Endothelial cell of umbilical vein (primary cell): ENCODE measurements at regions of chr15 and their contacts with region 1.

Region 1: GRCh38 chr15:93087825-93088199 is 1.2 kb downstream of the RGMA start:
- DNase-seq: peak; percentile 47
- H3K4me3 ChIP-seq: no peak overlapping the region
- H3K27ac ChIP-seq: no peak overlapping the region
- H3K4me1 ChIP-seq: peaks cover 3% of the 10 kb centered on the region
- H3K27me3 ChIP-seq: peaks cover 40 to 53% of the 10 kb centered on the region in 2 experiments
- CTCF ChIP-seq: peak; percentile 78 to 82
- POLR2A ChIP-seq: no peak

Region 2: DNA sequence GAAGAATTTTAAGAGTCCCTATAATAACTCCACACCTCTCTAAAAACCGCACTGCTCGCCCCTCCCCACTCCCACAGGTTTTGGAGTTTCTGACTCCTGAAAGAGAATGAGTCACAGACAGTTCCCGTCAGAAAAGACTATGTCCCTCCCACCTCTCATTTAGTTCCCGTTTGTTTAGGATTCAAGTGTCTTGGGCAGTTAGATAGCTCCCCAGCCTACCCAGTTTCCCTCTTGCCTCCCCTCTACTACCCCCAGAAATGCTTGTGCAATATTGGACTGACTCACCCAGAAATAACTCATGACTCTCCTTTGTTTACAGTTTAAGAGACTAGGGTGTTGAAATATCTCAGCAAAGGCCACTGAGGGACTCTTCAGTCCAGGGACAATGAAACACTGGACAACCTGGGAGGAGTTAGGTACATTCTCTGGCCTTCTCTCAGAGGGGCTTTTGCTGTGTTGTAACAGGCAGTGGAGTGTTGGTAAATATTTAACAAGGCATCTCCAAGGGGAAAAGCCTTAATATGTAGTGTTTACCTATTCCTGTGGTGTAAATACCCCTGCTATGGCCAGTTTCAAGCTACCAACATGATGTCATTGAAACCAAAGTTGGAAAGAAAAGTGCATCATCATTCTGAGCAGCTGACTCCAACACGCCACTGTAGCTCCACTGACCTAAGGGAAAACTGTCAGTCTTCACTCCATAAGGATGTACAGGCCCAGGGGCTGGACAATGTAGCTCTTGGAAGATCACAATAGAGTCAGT is 283.8 kb before region 1 on chr15:
- CTCF ChIA-PET with region 1: no interaction called
- POLR2A ChIA-PET with region 1: no interaction called
- dilution Hi-C with region 1: no loop called
- intact Hi-C with region 1: no loop called
- DNase-seq: peak; percentile 28
- H3K4me3 ChIP-seq: no peak overlapping the region
- H3K27ac ChIP-seq: peak overlapping the region; percentile 38
- H3K4me1 ChIP-seq: peaks cover 10% of the 10 kb centered on the region
- H3K27me3 ChIP-seq: no peaks in the 10 kb centered on the region
- CTCF ChIP-seq: no peak
- POLR2A ChIP-seq: no peak

Region 3: DNA sequence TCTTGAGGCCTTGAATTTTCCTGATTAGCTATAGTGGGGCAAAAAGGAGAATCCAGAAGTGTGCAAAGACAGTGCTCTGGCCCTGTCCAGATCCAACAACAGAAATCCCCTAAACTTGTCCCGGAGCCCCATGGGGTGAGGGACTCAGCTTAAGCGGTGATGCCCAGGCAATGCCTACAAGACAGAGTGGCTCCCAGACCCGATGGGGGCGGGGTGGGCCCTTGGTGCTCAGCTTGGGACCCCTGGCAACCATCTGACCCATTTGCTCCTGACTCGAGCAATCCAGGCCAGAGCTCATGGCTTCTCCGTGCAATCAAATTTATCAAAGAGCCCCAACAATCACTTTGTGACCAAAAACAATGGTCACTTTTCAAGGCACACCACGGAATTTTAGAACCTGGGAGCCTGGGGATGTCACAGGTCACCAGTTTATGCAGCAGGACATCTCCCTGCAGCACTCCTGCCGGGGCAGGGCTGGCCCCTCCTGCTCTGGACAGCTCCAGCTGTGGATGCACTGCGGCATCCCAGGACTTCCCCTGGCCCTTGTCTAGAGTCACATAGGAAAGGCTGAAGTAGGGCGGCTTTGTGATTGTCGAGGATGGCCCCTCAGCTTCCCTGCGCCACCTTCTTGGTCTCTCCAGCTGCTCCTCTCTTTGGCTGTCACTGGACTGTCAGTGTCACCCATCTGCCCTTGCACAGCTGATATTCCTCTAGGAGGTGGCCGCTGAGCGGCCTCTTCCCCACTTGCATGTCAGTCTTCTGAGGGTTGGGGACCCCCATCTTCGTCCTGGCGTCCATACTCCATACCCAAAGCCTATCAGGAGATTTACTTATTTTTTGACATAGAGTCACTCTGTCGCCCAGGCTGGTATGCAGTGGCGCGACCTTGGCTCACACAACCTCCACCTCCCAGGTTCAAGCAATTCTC is 27.2 kb before region 1 on chr15:
- CTCF ChIA-PET with region 1: interaction called, 18 read pairs
- POLR2A ChIA-PET with region 1: no interaction called
- dilution Hi-C with region 1: no loop called
- intact Hi-C with region 1: no loop called
- DNase-seq: no peak
- H3K4me3 ChIP-seq: no peak overlapping the region
- H3K27ac ChIP-seq: no peak overlapping the region
- H3K4me1 ChIP-seq: no peaks in the 10 kb centered on the region
- H3K27me3 ChIP-seq: no peaks in the 10 kb centered on the region
- CTCF ChIP-seq: no peak
- POLR2A ChIP-seq: no peak

Region 4: DNA sequence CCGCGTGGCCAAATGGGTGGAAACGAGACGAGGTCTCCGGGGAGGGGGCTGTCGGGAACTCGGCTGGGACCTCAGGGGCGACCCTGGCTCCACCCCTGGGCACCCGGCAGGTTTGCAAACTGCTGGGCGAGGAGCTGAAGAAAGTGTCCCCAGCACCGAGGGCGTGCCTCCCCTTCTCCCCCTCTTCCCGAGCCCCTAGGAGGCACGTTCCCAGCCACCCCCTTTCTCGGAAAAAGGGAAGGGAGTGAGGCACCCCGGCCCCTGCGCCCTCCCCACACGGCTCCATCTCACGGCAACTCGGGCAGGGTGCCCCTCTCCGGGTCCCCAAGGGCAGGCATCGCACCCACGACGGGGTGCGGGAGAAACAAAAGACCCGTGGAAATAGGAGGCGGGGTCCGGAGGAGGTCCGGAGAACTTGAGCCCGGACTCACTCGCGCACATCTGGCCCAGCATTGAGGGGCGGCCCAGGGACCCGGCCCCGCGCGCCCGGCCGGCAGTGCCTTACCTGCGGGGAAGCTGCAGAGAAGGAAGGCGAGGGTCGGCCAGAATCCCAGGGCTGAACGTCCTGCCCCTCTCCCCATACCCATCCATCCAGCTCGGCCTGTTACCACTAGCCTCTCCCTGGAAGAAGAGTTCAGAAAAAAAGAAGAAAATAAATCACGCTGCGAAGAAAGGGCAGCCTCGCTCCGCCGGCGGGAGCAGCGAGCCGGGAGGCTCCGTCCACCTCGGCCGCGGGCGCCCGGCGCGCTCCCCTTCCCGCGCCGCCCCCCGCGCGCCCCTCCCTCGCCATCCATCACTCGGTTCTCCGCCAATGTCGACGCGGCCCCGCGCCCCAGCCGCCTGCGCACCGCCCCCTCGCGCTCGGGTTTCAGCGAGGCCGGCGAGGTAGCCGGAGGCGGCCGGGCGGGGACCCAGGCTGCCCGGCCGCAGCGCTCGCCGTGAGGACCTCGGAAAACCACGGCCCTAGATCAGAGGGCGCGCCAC is 15.1 kb before region 1 on chr15:
- CTCF ChIA-PET with region 1: interaction called, 31 read pairs
- POLR2A ChIA-PET with region 1: no interaction called
- dilution Hi-C with region 1: no loop called
- intact Hi-C with region 1: no loop called
- DNase-seq: peak; percentile 42
- H3K4me3 ChIP-seq: peak overlapping the region in 1 of 3 experiments; percentile 14
- H3K27ac ChIP-seq: no peak overlapping the region
- H3K4me1 ChIP-seq: peaks cover 3% of the 10 kb centered on the region
- H3K27me3 ChIP-seq: peaks cover 20 to 26% of the 10 kb centered on the region in 2 experiments
- CTCF ChIP-seq: no peak
- POLR2A ChIP-seq: no peak

Region 5: GRCh38 chr15:93179072-93179471 is 91.3 kb after region 1 on chr15:
- CTCF ChIA-PET with region 1: no interaction called
- POLR2A ChIA-PET with region 1: no interaction called
- dilution Hi-C with region 1: no loop called
- intact Hi-C with region 1: no loop called
- DNase-seq: no peak
- H3K4me3 ChIP-seq: no peak overlapping the region
- H3K27ac ChIP-seq: no peak overlapping the region
- H3K4me1 ChIP-seq: no peaks in the 10 kb centered on the region
- H3K27me3 ChIP-seq: no peaks in the 10 kb centered on the region
- CTCF ChIP-seq: no peak
- POLR2A ChIP-seq: no peak

Region 6: GRCh38 chr15:94119923-94120775 is 1032.3 kb after region 1 on chr15:
- CTCF ChIA-PET with region 1: interaction called, 10 read pairs
- POLR2A ChIA-PET with region 1: no interaction called
- dilution Hi-C with region 1: no loop called
- intact Hi-C with region 1: loop called (anchors 1 kb)
- DNase-seq: peak; percentile 65
- H3K4me3 ChIP-seq: no peak overlapping the region
- H3K27ac ChIP-seq: no peak overlapping the region
- H3K4me1 ChIP-seq: no peaks in the 10 kb centered on the region
- H3K27me3 ChIP-seq: no peaks in the 10 kb centered on the region
- CTCF ChIP-seq: peak; percentile 62 to 63
- POLR2A ChIP-seq: no peak

Region 7: GRCh38 chr15:94154245-94154644 is 1066.4 kb after region 1 on chr15:
- CTCF ChIA-PET with region 1: no interaction called
- POLR2A ChIA-PET with region 1: no interaction called
- dilution Hi-C with region 1: no loop called
- intact Hi-C with region 1: no loop called
- DNase-seq: no peak
- H3K4me3 ChIP-seq: no peak overlapping the region
- H3K27ac ChIP-seq: no peak overlapping the region
- H3K4me1 ChIP-seq: no peaks in the 10 kb centered on the region
- H3K27me3 ChIP-seq: no peaks in the 10 kb centered on the region
- CTCF ChIP-seq: no peak
- POLR2A ChIP-seq: no peak